T-cell (primary cell): ENCODE measurements at regions of chr3 and their contacts with region 1.

Region 1: DNA sequence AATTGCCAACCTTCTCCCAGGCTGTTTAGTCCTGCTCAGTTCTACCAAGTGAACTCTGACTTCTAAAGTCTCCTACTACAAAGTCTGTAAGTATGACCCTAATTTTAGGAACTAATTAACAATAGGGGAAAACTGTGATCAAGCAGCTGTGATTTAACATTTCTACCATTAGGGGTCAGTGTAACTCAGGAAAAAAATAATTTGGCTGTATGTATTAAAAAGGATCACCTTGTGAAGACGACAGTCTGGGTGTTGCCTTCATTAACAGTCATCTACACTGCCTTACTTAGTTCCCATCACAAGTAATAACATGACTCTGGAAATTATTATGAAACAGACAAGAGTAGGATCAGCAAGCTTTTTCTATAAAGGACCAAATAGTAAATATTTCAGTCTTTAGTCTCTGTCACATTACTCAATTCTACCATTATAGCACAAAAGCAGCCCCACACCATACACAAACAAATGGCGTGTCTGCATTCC is 4.2 kb upstream of the NPHP3 start:
- DNase-seq: peak in 2 of 35 experiments; percentile 21 to 77
- ATAC-seq: no peak
- H3K4me3 ChIP-seq: no peak overlapping the region
- H3K4me3 Mint-ChIP-seq: no peak overlapping the region
- H3K27ac ChIP-seq: no peak overlapping the region
- H3K27ac Mint-ChIP-seq: no peak overlapping the region
- H3K4me1 ChIP-seq: peaks cover 6 to 10% of the 10 kb centered on the region in 2 experiments
- H3K4me1 Mint-ChIP-seq: peaks cover 14 to 15% (median 15%) of the 10 kb centered on the region in 3 donors
- H3K27me3 ChIP-seq: no peaks in the 10 kb centered on the region
- H3K27me3 Mint-ChIP-seq: peaks cover 14 to 20% of the 10 kb centered on the region in 2 donors

Region 2: DNA sequence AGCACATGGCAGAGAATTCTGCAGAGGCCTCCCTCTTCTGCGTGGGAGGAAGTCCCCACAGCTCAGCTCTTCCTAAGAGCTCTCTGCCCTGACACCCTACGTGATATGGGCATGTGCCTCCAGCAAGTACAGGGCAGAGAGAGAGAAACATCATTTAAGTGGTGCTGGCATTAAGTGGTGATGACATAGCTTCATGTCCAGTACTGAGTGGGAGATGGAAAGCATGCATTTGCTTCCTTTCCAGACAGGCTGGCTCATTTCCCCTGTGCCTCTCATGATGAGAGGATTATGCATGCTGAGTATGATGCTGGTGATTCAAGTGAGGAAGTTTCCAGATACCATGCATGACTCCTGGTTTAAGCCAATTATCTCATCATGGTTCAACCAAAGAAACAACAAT is 700.3 kb after region 1 on chr3:
- CTCF ChIA-PET with region 1: interaction called, 5 to 18 read pairs
- POLR2A ChIA-PET with region 1: interaction called in 1 of 2 experiments, 7 read pairs
- DNase-seq: no peak
- ATAC-seq: no peak
- H3K4me3 ChIP-seq: no peak overlapping the region
- H3K4me3 Mint-ChIP-seq: no peak overlapping the region
- H3K27ac ChIP-seq: no peak overlapping the region
- H3K27ac Mint-ChIP-seq: peak overlapping the region in 1 of 2 donors; percentile 28
- H3K4me1 ChIP-seq: no peaks in the 10 kb centered on the region
- H3K4me1 Mint-ChIP-seq: peaks cover 2 to 9% (median 2%) of the 10 kb centered on the region in 3 donors
- H3K27me3 ChIP-seq: peaks cover 0 to 2% of the 10 kb centered on the region in 2 experiments
- H3K27me3 Mint-ChIP-seq: peaks cover 0 to 9% of the 10 kb centered on the region in 2 donors

Region 3: GRCh38 chr3:133573054-133573628 is 846.8 kb after region 1 on chr3:
- CTCF ChIA-PET with region 1: interaction called in 1 of 2 experiments, 20 read pairs
- POLR2A ChIA-PET with region 1: interaction called in 1 of 2 experiments, 3 read pairs
- DNase-seq: peak; percentile 99 to 100 (median 100)
- ATAC-seq: peak; percentile 78 to 86 (median 83)
- H3K4me3 ChIP-seq: peak overlapping the region; percentile 25 to 49
- H3K4me3 Mint-ChIP-seq: peak overlapping the region; percentile 83 to 93 (median 85)
- H3K27ac ChIP-seq: peak overlapping the region; percentile 90
- H3K27ac Mint-ChIP-seq: peak overlapping the region; percentile 99 to 100
- H3K4me1 ChIP-seq: peaks cover 30 to 35% of the 10 kb centered on the region in 2 experiments
- H3K4me1 Mint-ChIP-seq: peaks cover 50 to 59% (median 54%) of the 10 kb centered on the region in 3 donors
- H3K27me3 ChIP-seq: no peaks in the 10 kb centered on the region
- H3K27me3 Mint-ChIP-seq: no peaks in the 10 kb centered on the region

Region 4: GRCh38 chr3:133578548-133579191 is 852.3 kb after region 1 on chr3:
- CTCF ChIA-PET with region 1: interaction called in 1 of 2 experiments, 20 read pairs
- POLR2A ChIA-PET with region 1: interaction called in 1 of 2 experiments, 3 read pairs
- DNase-seq: peak in 1 of 35 experiments; percentile 28
- ATAC-seq: no peak
- H3K4me3 ChIP-seq: no peak overlapping the region
- H3K4me3 Mint-ChIP-seq: peak overlapping the region; percentile 55 to 93 (median 68)
- H3K27ac ChIP-seq: no peak overlapping the region
- H3K27ac Mint-ChIP-seq: peak overlapping the region; percentile 27 to 49
- H3K4me1 ChIP-seq: peaks cover 33 to 50% of the 10 kb centered on the region in 2 experiments
- H3K4me1 Mint-ChIP-seq: peaks cover 78 to 82% (median 79%) of the 10 kb centered on the region in 3 donors
- H3K27me3 ChIP-seq: no peaks in the 10 kb centered on the region
- H3K27me3 Mint-ChIP-seq: no peaks in the 10 kb centered on the region